AG04450 (cell line): ENCODE measurements at regions of chr2 and their contacts with region 1.

Region 1: GRCh38 chr2:172113617-172114016 is 10.9 kb upstream of the DLX2 start:
- DNase-seq: no peak
- H3K4me3 ChIP-seq: no peak overlapping the region
- H3K27ac ChIP-seq: no peak overlapping the region
- H3K27me3 ChIP-seq: no peaks in the 10 kb centered on the region
- CTCF ChIP-seq: peak; percentile 39

Region 2: DNA sequence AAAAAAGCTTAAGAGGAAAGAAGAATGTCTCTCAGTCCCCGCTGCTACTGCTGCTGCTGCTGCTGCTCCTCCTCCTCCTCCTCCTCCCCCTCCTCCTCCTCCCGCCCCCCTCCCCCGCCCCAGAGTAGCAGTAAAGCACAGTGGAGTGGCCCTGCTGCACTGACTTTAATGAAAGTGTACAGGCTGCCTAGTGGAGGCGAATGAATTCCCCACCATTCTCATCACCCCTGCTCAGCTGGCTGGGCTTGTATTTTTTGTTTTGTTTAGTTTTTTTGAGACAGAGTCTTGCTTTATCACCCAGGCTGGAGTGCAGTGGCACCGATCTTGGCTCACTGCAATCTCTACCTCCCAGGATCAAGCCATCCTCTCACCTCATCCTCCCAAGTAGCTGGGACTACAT is 1150.2 kb before region 1 on chr2:
- CTCF ChIA-PET with region 1: no interaction called
- POLR2A ChIA-PET with region 1: interaction called, 11 read pairs
- DNase-seq: no peak
- H3K4me3 ChIP-seq: no peak overlapping the region
- H3K27ac ChIP-seq: no peak overlapping the region
- H3K27me3 ChIP-seq: no peaks in the 10 kb centered on the region
- CTCF ChIP-seq: no peak

Region 3: GRCh38 chr2:171574149-171574795 is 539.3 kb before region 1 on chr2:
- CTCF ChIA-PET with region 1: interaction called, 10 read pairs
- POLR2A ChIA-PET with region 1: no interaction called
- DNase-seq: peak; percentile 15
- H3K4me3 ChIP-seq: no peak overlapping the region
- H3K27ac ChIP-seq: no peak overlapping the region
- H3K27me3 ChIP-seq: peaks cover 4% of the 10 kb centered on the region
- CTCF ChIP-seq: peak; percentile 95

Region 4: GRCh38 chr2:171895786-171896185 is 217.8 kb before region 1 on chr2:
- CTCF ChIA-PET with region 1: no interaction called
- POLR2A ChIA-PET with region 1: no interaction called
- DNase-seq: no peak
- H3K4me3 ChIP-seq: no peak overlapping the region
- H3K27ac ChIP-seq: no peak overlapping the region
- H3K27me3 ChIP-seq: no peaks in the 10 kb centered on the region
- CTCF ChIP-seq: no peak

Region 5: DNA sequence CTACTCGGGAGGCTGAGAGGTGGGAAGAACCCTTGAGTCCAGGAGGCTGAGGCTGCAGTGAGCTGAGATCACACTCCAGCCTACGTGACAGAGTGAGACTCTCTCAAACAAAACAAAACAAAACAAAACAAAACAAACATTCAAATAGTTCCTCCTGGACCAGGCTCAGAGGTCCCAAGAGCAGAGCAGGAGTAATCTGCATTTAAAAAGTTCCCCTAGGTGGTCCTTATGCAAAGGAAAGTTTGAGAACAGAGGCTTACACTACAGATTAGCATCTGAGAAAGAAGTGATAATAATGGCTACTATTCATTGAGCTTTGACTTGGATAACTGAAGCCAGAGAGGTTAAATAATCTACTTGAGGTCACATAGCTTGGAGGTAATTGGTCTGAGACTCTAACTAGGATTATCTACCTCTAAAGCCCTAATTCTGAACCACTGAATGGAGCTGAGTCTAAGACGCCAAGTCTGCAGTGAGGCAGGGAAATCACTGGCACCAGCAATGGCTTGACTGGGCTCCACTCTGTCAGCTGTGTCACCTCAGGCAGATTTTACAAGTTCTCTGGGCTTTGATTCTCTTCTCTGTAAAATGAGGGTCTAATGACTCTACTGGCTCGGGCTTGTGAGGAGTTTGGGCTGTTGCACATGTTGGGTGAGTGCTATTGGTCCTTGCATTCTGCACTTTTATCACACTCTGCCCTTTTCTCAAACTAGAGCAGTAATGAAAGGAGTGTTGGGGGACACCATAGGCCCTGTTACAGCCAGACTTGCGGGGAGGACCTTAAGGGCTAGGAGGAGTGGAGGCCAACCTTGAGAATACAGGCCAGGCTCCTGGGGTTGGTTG is 18.3 kb after region 1 on chr2:
- CTCF ChIA-PET with region 1: interaction called, 12 read pairs
- POLR2A ChIA-PET with region 1: no interaction called
- DNase-seq: no peak
- H3K4me3 ChIP-seq: no peak overlapping the region
- H3K27ac ChIP-seq: no peak overlapping the region
- H3K27me3 ChIP-seq: peaks cover 3% of the 10 kb centered on the region
- CTCF ChIP-seq: no peak